ENCODE measurements at regions of chr4 and their contacts with region 1.

Region 1: DNA sequence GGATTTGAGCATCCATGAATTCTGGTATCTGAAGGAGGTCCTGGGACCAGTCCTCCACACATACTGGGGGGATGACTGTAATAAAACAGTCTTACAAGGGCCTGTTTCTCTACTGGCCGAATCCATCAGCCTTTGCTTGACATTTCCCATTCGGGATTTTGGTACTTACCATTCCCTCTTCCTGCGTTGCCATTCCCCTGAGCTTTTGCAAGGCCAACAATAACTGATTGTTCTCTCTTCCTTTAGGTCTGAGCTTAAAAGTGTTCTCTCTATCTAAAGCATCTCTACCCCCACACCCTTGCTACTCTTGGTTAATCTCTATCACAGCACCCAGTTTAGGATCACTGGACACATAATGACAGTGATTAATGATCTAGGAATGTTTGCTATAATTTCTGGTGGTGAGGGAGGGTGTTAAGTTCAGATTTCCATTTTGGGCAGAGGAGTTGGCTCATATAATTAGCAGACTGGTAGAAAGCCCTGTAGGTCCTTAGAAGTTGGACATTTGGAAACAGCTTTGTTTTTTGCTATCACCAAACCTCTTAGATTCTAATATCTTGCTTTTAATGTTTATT is 29.4 kb downstream of the TMA16 start:
- DNase-seq: no peak
- ATAC-seq: no peak
- H3K4me3 Mint-ChIP-seq: no peak overlapping the region
- H3K27ac Mint-ChIP-seq: no peak overlapping the region
- H3K4me1 Mint-ChIP-seq: peaks cover 6% of the 10 kb centered on the region
- H3K27me3 Mint-ChIP-seq: no peaks in the 10 kb centered on the region
- CTCF ChIP-seq: no peak

Region 2: DNA sequence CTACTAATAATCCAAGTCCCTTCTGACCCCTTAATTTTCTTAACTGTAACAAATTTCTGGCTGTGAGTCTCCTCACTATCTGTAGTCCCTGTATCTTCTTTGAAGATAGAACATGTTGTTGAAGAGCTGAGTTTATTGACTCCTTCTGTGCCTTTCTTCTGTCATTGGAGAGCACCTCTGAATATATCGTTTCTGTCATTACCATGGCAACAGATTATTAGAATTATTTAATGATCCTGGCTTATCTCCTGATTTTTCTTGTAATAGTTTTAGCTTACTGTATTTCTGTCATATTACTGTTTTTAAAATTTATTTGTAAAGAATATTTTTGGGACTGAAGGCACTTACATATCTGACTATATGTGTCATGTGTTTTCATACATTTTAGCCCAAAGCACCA is 17.2 kb before region 1 on chr4:
- CTCF ChIA-PET with region 1: no interaction called
- POLR2A ChIA-PET with region 1: no interaction called
- intact Hi-C with region 1: loop called (anchors 2 kb)
- DNase-seq: no peak
- ATAC-seq: no peak
- H3K4me3 Mint-ChIP-seq: no peak overlapping the region
- H3K27ac Mint-ChIP-seq: no peak overlapping the region
- H3K4me1 Mint-ChIP-seq: peaks cover 43% of the 10 kb centered on the region
- H3K27me3 Mint-ChIP-seq: no peaks in the 10 kb centered on the region
- CTCF ChIP-seq: no peak

Region 3: GRCh38 chr4:163535657-163536056 is 11.8 kb after region 1 on chr4:
- CTCF ChIA-PET with region 1: interaction called, 6 read pairs
- POLR2A ChIA-PET with region 1: no interaction called
- intact Hi-C with region 1: loop called (anchors 1 kb)
- DNase-seq: no peak
- ATAC-seq: peak; percentile 60
- H3K4me3 Mint-ChIP-seq: no peak overlapping the region
- H3K27ac Mint-ChIP-seq: peak overlapping the region; percentile 44
- H3K4me1 Mint-ChIP-seq: peaks cover 19% of the 10 kb centered on the region
- H3K27me3 Mint-ChIP-seq: no peaks in the 10 kb centered on the region
- CTCF ChIP-seq: no peak